Activated CD4-positive, alpha-beta memory T cell treated with anti-CD3 and anti-CD28 coated beads for 36 hours (primary cell): ENCODE measurements at regions of chr11 and their contacts with region 1.

Region 1: GRCh38 chr11:78564490-78565467 is 9.9 kb downstream of the NARS2 start:
- DNase-seq: no peak
- H3K4me3 Mint-ChIP-seq: no peak overlapping the region
- H3K27ac Mint-ChIP-seq: no peak overlapping the region
- H3K4me1 Mint-ChIP-seq: peaks cover 28% of the 10 kb centered on the region
- H3K27me3 Mint-ChIP-seq: no peaks in the 10 kb centered on the region

Region 2: DNA sequence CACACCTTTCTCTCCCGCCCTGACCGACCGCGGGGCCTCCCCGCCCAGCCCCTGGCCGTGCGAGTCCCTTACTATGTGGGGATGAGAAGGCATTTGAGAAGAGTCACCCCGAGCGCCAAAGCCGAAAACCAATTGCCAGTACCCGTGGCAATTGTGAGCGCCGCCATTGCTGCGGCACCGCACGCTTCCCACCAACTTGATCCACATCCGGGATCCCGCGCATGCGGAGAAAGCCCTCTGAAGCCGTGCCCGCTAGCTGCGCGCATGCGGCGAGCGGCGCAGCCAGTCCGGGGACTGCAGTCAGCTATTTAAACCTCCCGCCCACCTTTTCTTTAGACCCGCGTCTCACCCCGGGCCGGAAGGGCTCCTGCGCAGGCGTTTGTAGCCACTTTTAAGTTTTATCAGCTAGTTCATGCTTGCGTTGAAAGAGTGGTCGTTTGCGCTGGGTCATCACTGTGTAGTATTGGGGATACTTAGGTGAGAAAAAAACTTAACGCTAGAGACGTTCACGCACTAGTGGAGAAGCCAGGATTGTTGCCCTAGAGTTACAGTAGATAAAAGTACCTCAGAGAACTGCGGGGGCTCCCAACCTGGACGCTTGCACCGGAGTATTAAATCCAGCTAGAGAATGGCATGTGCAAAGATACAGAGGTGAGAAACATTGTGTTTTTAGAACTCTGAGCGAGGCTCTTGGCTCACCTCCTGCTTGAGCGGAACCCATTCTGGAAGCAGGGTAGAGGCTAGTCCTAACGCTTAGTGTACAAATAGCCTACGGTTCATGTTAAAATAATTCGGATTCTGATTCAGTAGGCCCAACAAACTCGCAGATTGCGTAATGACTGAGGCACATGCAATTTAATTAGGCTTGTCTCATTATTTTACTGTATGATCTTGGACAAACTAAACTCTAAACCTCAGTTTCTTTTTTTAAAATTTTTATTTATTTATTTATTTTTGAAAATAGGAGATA is 425.1 kb before region 1 on chr11 and contains the start of gene ALG8:
- CTCF ChIA-PET with region 1: interaction called, 14 read pairs
- POLR2A ChIA-PET with region 1: no interaction called
- intact Hi-C with region 1: no loop called
- DNase-seq: peak; percentile 98
- H3K4me3 Mint-ChIP-seq: peak within 1 kb of the TSS; percentile 81
- H3K27ac Mint-ChIP-seq: peak within 1 kb of the TSS; percentile 93
- H3K4me1 Mint-ChIP-seq: peaks cover 34% of the 10 kb centered on the region
- H3K27me3 Mint-ChIP-seq: no peaks in the 10 kb centered on the region
- total RNA-seq, gene ALG8: 45.8 to 45.9 TPM

Region 3: GRCh38 chr11:78325274-78325781 is 239.5 kb before region 1 on chr11:
- CTCF ChIA-PET with region 1: no interaction called
- POLR2A ChIA-PET with region 1: no interaction called
- intact Hi-C with region 1: loop called (anchors 10 kb)
- DNase-seq: peak; percentile 16
- H3K4me3 Mint-ChIP-seq: no peak overlapping the region
- H3K27ac Mint-ChIP-seq: peak overlapping the region; percentile 77
- H3K4me1 Mint-ChIP-seq: peaks cover 40% of the 10 kb centered on the region
- H3K27me3 Mint-ChIP-seq: no peaks in the 10 kb centered on the region

Region 4: GRCh38 chr11:78465169-78465942 is 99.4 kb before region 1 on chr11:
- CTCF ChIA-PET with region 1: interaction called, 3 read pairs
- POLR2A ChIA-PET with region 1: no interaction called
- intact Hi-C with region 1: loop called (anchors 5 kb)
- DNase-seq: peak; percentile 70
- H3K4me3 Mint-ChIP-seq: peak overlapping the region; percentile 35
- H3K27ac Mint-ChIP-seq: peak overlapping the region; percentile 75
- H3K4me1 Mint-ChIP-seq: peaks cover 21% of the 10 kb centered on the region
- H3K27me3 Mint-ChIP-seq: no peaks in the 10 kb centered on the region